ENCODE measurements at regions of chr12 and their contacts with region 1.

Region 1: DNA sequence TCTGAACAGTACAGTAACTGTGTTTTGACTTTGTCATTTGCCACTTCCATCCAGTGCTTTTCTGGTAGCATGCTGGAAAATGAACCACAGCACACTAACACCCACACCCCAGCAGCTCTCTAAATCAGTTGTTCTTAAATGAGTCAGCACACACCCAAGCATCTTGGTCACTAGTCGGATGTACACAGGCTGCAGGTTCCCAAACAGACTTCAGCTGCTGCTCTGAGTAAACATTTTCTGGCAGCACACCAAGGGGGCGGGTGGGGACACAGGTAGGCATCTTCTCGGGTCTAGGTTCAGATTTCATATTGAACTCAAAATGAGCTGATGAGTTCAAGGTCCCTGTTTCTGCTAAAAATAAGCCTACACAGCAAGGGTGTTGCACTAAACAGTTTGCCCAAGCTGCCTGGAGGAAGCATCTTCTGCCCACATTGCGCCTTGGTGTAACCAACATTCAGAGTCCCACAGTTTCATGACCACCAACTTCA is 39.8 kb downstream of the IFNG start:
- DNase-seq: peak; percentile 74
- ATAC-seq: peak; percentile 92
- H3K4me3 Mint-ChIP-seq: peak overlapping the region; percentile 9
- H3K27ac Mint-ChIP-seq: peak overlapping the region; percentile 74
- H3K4me1 Mint-ChIP-seq: peaks cover 30% of the 10 kb centered on the region
- H3K27me3 Mint-ChIP-seq: no peaks in the 10 kb centered on the region

Region 2: DNA sequence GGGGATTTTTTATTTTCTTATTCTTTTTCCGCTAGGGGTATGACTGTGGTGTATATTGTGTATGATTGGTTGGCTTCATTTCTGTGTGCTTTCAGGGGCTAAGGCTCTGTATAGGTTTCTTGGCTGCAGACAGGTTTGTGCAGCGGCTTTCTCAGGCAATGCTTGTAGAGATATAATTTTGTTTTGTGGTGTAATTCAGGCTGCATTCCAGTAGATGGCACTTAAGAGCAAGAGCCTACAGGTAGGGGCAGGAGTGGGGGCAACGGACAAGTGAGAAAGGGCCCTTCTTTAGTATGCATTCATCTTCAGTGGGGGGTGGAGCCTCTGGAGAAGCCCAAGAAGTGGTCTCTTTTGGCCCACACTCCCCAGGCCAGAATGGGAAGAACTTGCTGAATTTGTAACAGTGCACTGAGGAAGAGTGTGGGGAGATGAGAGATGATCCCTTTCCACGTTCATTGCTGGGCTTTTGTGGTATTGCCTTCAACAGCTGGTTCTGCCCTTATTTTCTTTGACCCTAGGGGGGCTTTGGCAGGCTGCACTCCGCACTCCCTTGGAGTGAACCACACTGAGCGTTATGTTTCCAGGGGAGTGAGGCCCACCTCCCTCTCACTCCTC is 51.9 kb before region 1 on chr12:
- CTCF ChIA-PET with region 1: interaction called, 15 read pairs
- POLR2A ChIA-PET with region 1: no interaction called
- DNase-seq: no peak
- ATAC-seq: no peak
- H3K4me3 Mint-ChIP-seq: no peak overlapping the region
- H3K27ac Mint-ChIP-seq: no peak overlapping the region
- H3K4me1 Mint-ChIP-seq: peaks cover 10% of the 10 kb centered on the region
- H3K27me3 Mint-ChIP-seq: no peaks in the 10 kb centered on the region

Region 3: DNA sequence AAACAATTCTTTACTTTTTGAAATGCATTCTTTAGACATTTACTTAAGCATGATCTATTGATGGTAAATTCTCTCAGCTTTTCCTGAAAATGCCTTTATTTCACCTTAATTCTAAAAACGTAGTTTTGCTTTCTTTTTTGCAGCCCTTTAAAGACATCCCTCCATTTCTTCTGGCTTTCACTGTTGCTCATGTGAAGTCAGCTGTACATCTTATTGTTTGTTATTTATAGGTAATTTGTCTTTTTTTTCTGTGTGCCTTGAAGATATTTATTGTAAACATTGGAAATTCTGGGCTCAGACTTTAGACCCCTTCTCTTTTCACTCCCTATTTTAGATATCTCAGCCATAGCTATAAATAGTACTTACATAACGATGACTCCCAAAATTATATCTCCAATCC is 30.7 kb before region 1 on chr12:
- CTCF ChIA-PET with region 1: no interaction called
- POLR2A ChIA-PET with region 1: no interaction called
- DNase-seq: no peak
- ATAC-seq: no peak
- H3K4me3 Mint-ChIP-seq: no peak overlapping the region
- H3K27ac Mint-ChIP-seq: no peak overlapping the region
- H3K4me1 Mint-ChIP-seq: peaks cover 3% of the 10 kb centered on the region
- H3K27me3 Mint-ChIP-seq: no peaks in the 10 kb centered on the region

Region 4: GRCh38 chr12:68137335-68137830 is 17.6 kb after region 1 on chr12:
- CTCF ChIA-PET with region 1: interaction called, 37 read pairs
- POLR2A ChIA-PET with region 1: interaction called, 5 read pairs
- DNase-seq: peak; percentile 45
- ATAC-seq: peak; percentile 76
- H3K4me3 Mint-ChIP-seq: peak overlapping the region; percentile 40
- H3K27ac Mint-ChIP-seq: peak overlapping the region; percentile 87
- H3K4me1 Mint-ChIP-seq: peaks cover 52% of the 10 kb centered on the region
- H3K27me3 Mint-ChIP-seq: no peaks in the 10 kb centered on the region

Region 5: GRCh38 chr12:68440068-68440581 is 320.4 kb after region 1 on chr12:
- CTCF ChIA-PET with region 1: no interaction called
- POLR2A ChIA-PET with region 1: no interaction called
- DNase-seq: no peak
- ATAC-seq: no peak
- H3K4me3 Mint-ChIP-seq: no peak overlapping the region
- H3K27ac Mint-ChIP-seq: no peak overlapping the region
- H3K4me1 Mint-ChIP-seq: peaks cover 35% of the 10 kb centered on the region
- H3K27me3 Mint-ChIP-seq: no peaks in the 10 kb centered on the region